Heart right ventricle (tissue), 16 donors: ENCODE measurements at regions of chr22 and their contacts with region 1.

Region 1: DNA sequence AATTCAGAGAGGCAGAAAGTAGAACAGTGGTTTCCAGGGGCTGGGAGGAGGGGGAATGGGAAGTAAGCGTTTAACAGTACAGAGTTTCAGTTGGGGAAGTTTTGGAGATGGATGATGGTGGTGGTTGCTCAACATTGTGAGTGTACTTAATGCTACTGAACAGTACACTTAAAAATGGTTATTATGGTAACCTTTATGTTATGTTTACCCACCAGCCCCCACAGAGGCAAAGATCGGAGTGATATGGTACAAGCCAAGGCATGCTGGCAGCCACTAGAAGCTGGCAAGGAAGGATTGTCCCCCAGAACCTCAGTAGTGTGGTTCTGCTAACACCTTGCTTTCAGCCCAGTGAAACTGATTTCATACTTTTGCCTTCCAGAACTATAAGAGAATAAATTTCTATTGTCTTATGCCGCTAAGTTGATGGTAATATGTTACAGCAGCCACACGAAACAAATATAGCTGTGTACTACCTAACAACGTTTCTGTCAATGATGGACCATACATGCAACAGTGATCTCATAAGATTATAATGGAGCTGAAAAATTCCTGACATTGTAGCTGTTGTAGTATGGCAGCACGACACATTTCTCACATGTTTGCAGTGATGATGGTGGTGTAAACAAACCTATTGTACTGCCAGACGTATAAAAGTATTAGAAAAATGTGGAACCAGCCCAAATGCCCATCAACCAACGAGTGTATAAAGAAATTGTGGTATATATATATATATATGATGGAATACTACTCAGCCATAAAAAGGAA is 6.0 kb upstream of the SLC5A1 start:
- DNase-seq: no peak
- ATAC-seq: no peak
- H3K4me3 ChIP-seq: no peak overlapping the region
- H3K27ac ChIP-seq: no peak overlapping the region
- H3K4me1 ChIP-seq: no peaks in the 10 kb centered on the region
- H3K27me3 ChIP-seq: peaks cover 0 to 20% (median 5%) of the 10 kb centered on the region in 7 donors
- CTCF ChIP-seq: no peak

Region 2: DNA sequence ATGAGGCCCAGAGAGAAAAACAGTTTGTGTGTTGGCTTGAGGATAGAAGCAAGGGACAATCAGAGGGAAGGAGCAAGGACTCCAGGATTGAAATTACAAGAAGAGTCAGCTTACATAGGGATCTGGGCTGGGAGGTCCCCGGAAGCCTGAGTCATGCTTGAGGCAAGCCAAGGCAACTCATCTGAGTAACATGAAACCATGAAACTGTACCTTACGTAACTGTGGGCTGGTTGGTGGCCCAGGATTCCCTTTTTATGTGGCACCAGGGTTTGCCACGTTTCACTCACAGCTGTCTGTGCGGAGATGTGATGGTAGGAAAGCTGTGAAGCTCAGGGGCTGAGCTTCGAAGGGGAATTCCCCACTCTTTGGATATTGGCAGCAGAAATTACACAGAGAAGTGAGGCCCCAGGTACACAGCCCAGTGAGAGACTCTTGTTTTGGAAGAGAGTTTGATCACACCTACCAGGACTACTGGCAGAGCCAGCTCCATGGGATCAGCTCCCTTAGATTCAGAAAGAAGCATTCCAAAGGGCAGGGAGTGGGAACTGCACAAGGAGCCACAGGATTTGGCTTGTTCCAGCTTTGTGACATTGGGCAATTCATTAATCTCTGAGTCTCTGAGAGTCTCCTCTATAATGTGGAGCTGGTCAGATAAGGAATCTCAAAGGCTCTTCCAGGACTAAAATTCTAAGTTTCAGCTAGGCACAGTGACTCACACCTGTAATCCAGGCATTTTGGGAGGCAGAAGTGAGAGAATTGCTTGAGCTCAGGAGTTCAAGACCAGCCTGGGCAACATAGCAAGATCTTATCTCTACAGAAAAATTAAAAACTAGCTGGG is 13.8 kb after region 1 on chr22:
- intact Hi-C with region 1: loop called in 1 of 10 experiments (anchors 1 kb)
- DNase-seq: peak in 1 of 2 donors; percentile 23
- ATAC-seq: peak; percentile 78 to 90 (median 81)
- H3K4me3 ChIP-seq: no peak overlapping the region
- H3K27ac ChIP-seq: peak overlapping the region in 3 of 10 donors; percentile 21 to 41 (median 27)
- H3K4me1 ChIP-seq: peaks cover 0 to 26% (median 8%) of the 10 kb centered on the region in 9 donors
- H3K27me3 ChIP-seq: peaks cover 0 to under 1% (median 0%) of the 10 kb centered on the region in 7 donors
- CTCF ChIP-seq: no peak

Region 3: DNA sequence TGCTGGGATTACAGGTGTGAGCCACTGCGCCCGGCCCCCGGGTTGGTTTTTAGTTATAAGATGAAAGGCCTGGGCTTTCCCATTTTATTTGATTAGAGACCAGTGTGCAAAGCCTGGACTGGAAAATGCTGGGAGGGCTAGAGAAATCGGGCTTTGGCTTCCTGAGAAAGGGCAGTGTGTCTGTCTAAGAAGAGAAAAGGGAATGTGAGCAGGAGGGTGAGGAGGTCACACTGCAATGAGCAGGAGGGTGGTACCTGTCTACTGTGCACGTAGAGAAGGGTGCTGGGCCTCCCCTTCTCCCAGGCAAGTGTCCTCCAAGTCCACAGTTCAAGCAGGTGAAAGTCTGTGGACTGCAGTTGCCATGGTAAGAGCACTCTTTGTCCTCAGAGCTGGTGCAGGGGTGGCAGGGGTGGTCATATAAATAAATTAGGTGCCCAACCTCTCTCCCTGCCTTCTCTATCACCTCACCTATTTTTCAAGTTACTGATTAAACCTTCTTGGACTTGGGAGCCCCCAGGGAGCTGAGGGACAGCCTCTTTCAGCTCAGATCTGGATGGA is 36.8 kb after region 1 on chr22:
- intact Hi-C with region 1: no loop called
- DNase-seq: no peak
- ATAC-seq: peak in 1 of 8 donors; percentile 27
- H3K4me3 ChIP-seq: no peak overlapping the region
- H3K27ac ChIP-seq: no peak overlapping the region
- H3K4me1 ChIP-seq: peaks cover 0 to 40% (median 24%) of the 10 kb centered on the region in 9 donors
- H3K27me3 ChIP-seq: peaks cover 0 to 10% (median 0%) of the 10 kb centered on the region in 7 donors
- CTCF ChIP-seq: no peak

Region 4: GRCh38 chr22:32378707-32379272 is 341.7 kb after region 1 on chr22:
- intact Hi-C with region 1: no loop called
- DNase-seq: no peak
- ATAC-seq: peak in 5 of 8 donors; percentile 25 to 44 (median 38)
- H3K4me3 ChIP-seq: no peak overlapping the region
- H3K27ac ChIP-seq: no peak overlapping the region
- H3K4me1 ChIP-seq: no peaks in the 10 kb centered on the region
- H3K27me3 ChIP-seq: no peaks in the 10 kb centered on the region
- CTCF ChIP-seq: peak in 7 of 9 donors; percentile 44 to 66 (median 50)